Activated naive CD4-positive, alpha-beta T cell treated with anti-CD3 and anti-CD28 coated beads for 36 hours (primary cell): ENCODE measurements at regions of chr1 and their contacts with region 1.

Region 1: DNA sequence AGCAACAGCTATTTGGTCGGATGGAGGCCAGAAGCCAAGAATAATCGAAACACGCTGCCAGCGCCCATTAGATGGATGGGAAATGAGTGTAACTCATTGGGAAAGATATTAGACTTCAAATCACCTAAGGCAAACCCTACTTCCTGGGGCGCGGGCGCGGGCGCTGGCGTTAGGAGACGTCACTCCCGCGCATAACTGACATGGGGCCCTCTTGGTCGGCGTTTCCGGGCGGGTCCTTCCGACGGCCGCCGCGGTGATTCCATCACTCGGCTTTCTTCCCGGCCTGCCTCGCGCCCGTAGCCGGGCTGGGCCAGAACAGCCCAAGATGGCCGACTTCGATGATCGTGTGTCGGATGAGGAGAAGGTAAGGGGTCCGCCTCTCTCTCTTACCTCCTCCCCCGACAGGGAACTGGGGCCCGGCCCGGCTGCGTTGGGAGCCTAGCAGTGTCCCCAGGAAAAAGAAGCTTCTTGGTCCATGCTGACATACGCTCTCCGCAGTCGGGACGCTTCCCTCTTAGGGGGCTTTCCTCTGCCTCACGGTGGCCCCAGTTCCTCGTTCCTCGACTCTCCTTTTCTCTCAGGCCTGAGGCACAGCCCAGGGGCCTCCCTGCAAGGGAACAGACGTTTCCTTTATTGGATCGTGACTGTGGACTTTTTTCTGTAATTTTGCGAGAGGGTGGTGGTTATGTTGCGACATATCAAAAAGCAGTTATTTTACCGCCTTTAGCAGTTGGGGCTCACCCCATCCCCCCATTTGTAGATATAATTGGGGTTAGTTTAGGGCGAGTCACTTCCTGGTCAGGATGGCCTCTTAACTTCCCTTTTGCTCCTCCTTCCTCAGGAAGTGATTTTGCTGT is at the start of gene CAPZA1:
- DNase-seq: peak; percentile 95
- H3K4me3 Mint-ChIP-seq: peak within 1 kb of the TSS; percentile 99
- H3K27ac Mint-ChIP-seq: peak within 1 kb of the TSS; percentile 100
- H3K4me1 Mint-ChIP-seq: peaks cover 48% of the 10 kb centered on the region
- H3K27me3 Mint-ChIP-seq: no peaks in the 10 kb centered on the region
- total RNA-seq, gene CAPZA1: 231 to 242 TPM

Region 2: GRCh38 chr1:112395821-112396652 is 223.7 kb before region 1 on chr1 and contains the start of gene CTTNBP2NL:
- CTCF ChIA-PET with region 1: interaction called, 19 read pairs
- intact Hi-C with region 1: loop called (anchors 1 kb)
- DNase-seq: peak; percentile 84
- H3K4me3 Mint-ChIP-seq: peak within 1 kb of the TSS; percentile 90
- H3K27ac Mint-ChIP-seq: no peak within 1 kb of the TSS
- H3K4me1 Mint-ChIP-seq: peaks cover 23% of the 10 kb centered on the region
- H3K27me3 Mint-ChIP-seq: peaks cover 9% of the 10 kb centered on the region
- total RNA-seq, gene CTTNBP2NL: 1.0 to 1.4 TPM

Region 3: DNA sequence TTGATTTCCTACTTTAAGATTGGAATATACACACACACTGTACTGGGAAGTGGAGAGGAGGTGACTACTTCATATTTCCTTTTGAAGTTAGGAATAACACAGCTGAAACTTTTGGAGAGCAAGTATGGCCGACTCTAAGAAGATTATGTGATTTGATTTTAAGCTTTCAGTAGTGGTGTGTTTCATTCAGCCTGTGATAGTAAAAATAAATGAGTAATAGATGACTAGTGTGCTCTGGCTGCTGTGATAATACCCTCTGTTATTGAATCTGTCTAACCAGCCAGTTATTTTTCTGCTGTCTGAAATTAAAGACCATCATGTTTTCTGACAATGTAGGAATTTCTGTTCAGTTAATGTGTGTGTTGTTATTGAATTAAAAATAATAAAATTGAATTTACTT is 175.5 kb before region 1 on chr1:
- CTCF ChIA-PET with region 1: no interaction called
- intact Hi-C with region 1: no loop called
- DNase-seq: no peak
- H3K4me3 Mint-ChIP-seq: no peak overlapping the region
- H3K27ac Mint-ChIP-seq: no peak overlapping the region
- H3K4me1 Mint-ChIP-seq: no peaks in the 10 kb centered on the region
- H3K27me3 Mint-ChIP-seq: no peaks in the 10 kb centered on the region

Region 4: GRCh38 chr1:112637254-112638116 is 17.7 kb after region 1 on chr1:
- CTCF ChIA-PET with region 1: interaction called, 3 read pairs
- intact Hi-C with region 1: loop called (anchors 1 kb)
- DNase-seq: no peak
- H3K4me3 Mint-ChIP-seq: no peak overlapping the region
- H3K27ac Mint-ChIP-seq: no peak overlapping the region
- H3K4me1 Mint-ChIP-seq: peaks cover 52% of the 10 kb centered on the region
- H3K27me3 Mint-ChIP-seq: no peaks in the 10 kb centered on the region

Region 5: DNA sequence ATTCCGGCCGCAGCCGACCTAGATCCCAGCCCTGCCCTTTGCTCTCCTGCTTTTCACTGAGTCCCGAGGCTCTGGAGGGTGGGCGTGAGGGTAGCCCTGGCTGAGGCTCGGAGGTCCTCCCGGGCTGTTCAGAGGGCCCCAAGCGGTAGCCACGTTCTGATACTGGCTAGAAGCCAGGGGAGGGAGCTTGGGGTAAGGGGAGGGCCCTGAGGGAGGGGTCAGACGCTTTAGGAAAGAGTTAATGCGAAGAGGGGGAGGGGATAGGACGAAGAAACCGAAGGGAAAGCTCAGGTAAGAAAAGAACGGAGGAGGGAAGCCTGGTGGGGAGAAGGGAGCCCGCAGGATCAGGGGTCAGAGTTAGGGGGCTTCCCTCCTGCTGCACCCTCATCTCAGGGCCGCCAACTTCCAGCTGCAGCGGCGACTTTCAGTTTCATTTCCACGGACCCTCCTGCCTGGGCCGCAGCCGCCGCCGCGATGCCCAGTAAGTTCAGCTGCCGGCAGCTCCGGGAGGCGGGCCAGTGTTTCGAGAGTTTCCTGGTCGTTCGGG is 54.8 kb after region 1 on chr1 and contains the start of gene MOV10:
- CTCF ChIA-PET with region 1: interaction called, 3 read pairs
- intact Hi-C with region 1: loop called (anchors 1 kb)
- DNase-seq: peak; percentile 60
- H3K4me3 Mint-ChIP-seq: peak within 1 kb of the TSS; percentile 92
- H3K27ac Mint-ChIP-seq: peak within 1 kb of the TSS; percentile 84
- H3K4me1 Mint-ChIP-seq: peaks cover 38% of the 10 kb centered on the region
- H3K27me3 Mint-ChIP-seq: no peaks in the 10 kb centered on the region
- total RNA-seq, gene MOV10: 46.0 to 48.8 TPM

Region 6: GRCh38 chr1:113031171-113031933 is 411.6 kb after region 1 on chr1:
- CTCF ChIA-PET with region 1: no interaction called
- intact Hi-C with region 1: no loop called
- DNase-seq: no peak
- H3K4me3 Mint-ChIP-seq: no peak overlapping the region
- H3K27ac Mint-ChIP-seq: no peak overlapping the region
- H3K4me1 Mint-ChIP-seq: peaks cover 4% of the 10 kb centered on the region
- H3K27me3 Mint-ChIP-seq: no peaks in the 10 kb centered on the region

Region 7: GRCh38 chr1:113811888-113812660 is 1192.3 kb after region 1 on chr1 and contains the start of gene RSBN1:
- CTCF ChIA-PET with region 1: no interaction called
- intact Hi-C with region 1: loop called (anchors 1 kb)
- DNase-seq: peak; percentile 99
- H3K4me3 Mint-ChIP-seq: peak within 1 kb of the TSS; percentile 98
- H3K27ac Mint-ChIP-seq: peak within 1 kb of the TSS; percentile 94
- H3K4me1 Mint-ChIP-seq: peaks cover 31% of the 10 kb centered on the region
- H3K27me3 Mint-ChIP-seq: no peaks in the 10 kb centered on the region
- total RNA-seq, gene RSBN1: 13.6 to 14.3 TPM